Natural killer cell (primary cell): ENCODE measurements at regions of chr14 and their contacts with region 1.

Region 1: DNA sequence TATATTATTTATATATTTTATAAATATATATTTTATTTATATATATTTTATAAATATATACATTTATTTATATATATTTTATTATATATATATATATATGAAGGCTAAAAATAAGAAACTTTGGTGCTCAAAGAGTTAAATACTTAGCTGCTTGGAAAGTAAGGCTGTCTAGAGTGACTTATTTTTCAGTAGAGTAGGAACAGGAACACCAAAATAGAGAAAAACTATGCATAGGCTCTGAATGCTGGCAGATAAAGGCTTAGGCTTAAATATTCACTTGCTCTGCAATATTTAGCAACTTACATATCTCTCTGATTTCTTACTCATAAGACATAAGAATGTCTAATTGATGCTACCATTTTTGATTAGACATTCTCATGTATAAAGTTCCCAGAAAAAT is 991.2 kb downstream of the VRK1 start:
- DNase-seq: no peak
- ATAC-seq: no peak
- H3K4me3 ChIP-seq: no peak overlapping the region
- H3K4me3 Mint-ChIP-seq: no peak overlapping the region
- H3K27ac ChIP-seq: no peak overlapping the region
- H3K27ac Mint-ChIP-seq: no peak overlapping the region
- H3K4me1 ChIP-seq: no peaks in the 10 kb centered on the region
- H3K4me1 Mint-ChIP-seq: peaks cover 13 to 14% of the 10 kb centered on the region in 2 donors
- H3K27me3 ChIP-seq: no peaks in the 10 kb centered on the region
- H3K27me3 Mint-ChIP-seq: peaks cover 0 to 3% of the 10 kb centered on the region in 2 donors
- CTCF ChIP-seq: no peak

Region 2: GRCh38 chr14:97251491-97252155 is 536.7 kb before region 1 on chr14:
- intact Hi-C with region 1: no loop called
- DNase-seq: no peak
- ATAC-seq: peak in 2 of 3 donors; percentile 30 to 34
- H3K4me3 ChIP-seq: no peak overlapping the region
- H3K4me3 Mint-ChIP-seq: peak overlapping the region; percentile 4
- H3K27ac ChIP-seq: no peak overlapping the region
- H3K27ac Mint-ChIP-seq: no peak overlapping the region
- H3K4me1 ChIP-seq: peaks cover 9% of the 10 kb centered on the region
- H3K4me1 Mint-ChIP-seq: peaks cover 31 to 34% of the 10 kb centered on the region in 2 donors
- H3K27me3 ChIP-seq: no peaks in the 10 kb centered on the region
- H3K27me3 Mint-ChIP-seq: peaks cover 11 to 16% of the 10 kb centered on the region in 2 donors
- CTCF ChIP-seq: no peak

Region 3: DNA sequence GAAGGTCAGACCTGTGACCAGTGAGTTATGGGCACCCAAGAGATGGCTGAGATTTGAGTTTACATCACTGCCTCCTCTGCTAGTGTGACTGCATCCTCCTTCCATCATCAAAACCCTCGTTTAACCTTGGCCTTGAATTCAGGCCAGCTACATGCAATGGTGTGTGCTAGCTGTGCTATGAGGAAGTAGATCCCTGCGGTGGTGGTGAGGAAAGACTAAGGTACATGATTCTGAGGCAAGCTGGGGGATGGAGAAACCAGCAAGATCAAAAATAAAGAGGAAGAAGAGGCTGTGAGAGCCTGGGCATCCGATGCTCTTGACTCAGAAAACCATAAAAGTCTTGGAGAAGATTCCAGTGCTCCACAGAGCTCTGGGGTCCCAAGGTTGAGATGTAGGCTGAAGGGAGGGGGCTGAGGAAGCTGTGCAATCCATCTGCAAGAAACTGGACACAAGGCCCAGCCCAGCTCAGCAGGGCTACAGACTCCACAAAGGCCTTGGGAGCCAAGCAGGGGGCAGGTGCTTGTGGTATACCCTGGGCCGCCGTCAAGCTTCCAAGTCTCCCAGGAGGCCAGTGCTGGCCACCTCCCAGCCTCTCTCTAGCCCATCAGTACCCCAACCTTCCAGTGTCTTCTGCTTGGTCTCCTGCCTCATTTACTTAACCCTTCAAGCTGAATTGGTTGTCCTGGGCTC is 216.4 kb before region 1 on chr14:
- intact Hi-C with region 1: no loop called
- DNase-seq: no peak
- ATAC-seq: peak in 1 of 3 donors; percentile 67
- H3K4me3 ChIP-seq: no peak overlapping the region
- H3K4me3 Mint-ChIP-seq: no peak overlapping the region
- H3K27ac ChIP-seq: no peak overlapping the region
- H3K27ac Mint-ChIP-seq: peak overlapping the region in 1 of 2 donors; percentile 3
- H3K4me1 ChIP-seq: no peaks in the 10 kb centered on the region
- H3K4me1 Mint-ChIP-seq: peaks cover 6 to 21% of the 10 kb centered on the region in 2 donors
- H3K27me3 ChIP-seq: no peaks in the 10 kb centered on the region
- H3K27me3 Mint-ChIP-seq: peaks cover 0 to 10% of the 10 kb centered on the region in 2 donors
- CTCF ChIP-seq: no peak

Region 4: GRCh38 chr14:97625477-97625876 is 162.9 kb before region 1 on chr14:
- intact Hi-C with region 1: loop called (anchors 10 kb)
- DNase-seq: no peak
- ATAC-seq: no peak
- H3K4me3 ChIP-seq: no peak overlapping the region
- H3K4me3 Mint-ChIP-seq: no peak overlapping the region
- H3K27ac ChIP-seq: no peak overlapping the region
- H3K27ac Mint-ChIP-seq: no peak overlapping the region
- H3K4me1 ChIP-seq: peaks cover 5% of the 10 kb centered on the region
- H3K4me1 Mint-ChIP-seq: peaks cover 8 to 15% of the 10 kb centered on the region in 2 donors
- H3K27me3 ChIP-seq: no peaks in the 10 kb centered on the region
- H3K27me3 Mint-ChIP-seq: no peaks in the 10 kb centered on the region
- CTCF ChIP-seq: no peak